ENCODE measurements at regions of chr13 and their contacts with region 1.

Region 1: GRCh38 chr13:27362064-27362883 is 62.1 kb upstream of the GTF3A start:
- DNase-seq: peak; percentile 87
- ATAC-seq: peak; percentile 97
- H3K4me3 Mint-ChIP-seq: peak overlapping the region; percentile 68
- H3K27ac Mint-ChIP-seq: peak overlapping the region; percentile 39
- H3K4me1 Mint-ChIP-seq: peaks cover 5% of the 10 kb centered on the region
- H3K27me3 Mint-ChIP-seq: peaks cover 22% of the 10 kb centered on the region

Region 2: GRCh38 chr13:26946684-26947343 is 415.5 kb before region 1 on chr13:
- CTCF ChIA-PET with region 1: interaction called, 13 read pairs
- POLR2A ChIA-PET with region 1: no interaction called
- DNase-seq: no peak
- ATAC-seq: no peak
- H3K4me3 Mint-ChIP-seq: no peak overlapping the region
- H3K27ac Mint-ChIP-seq: no peak overlapping the region
- H3K4me1 Mint-ChIP-seq: no peaks in the 10 kb centered on the region
- H3K27me3 Mint-ChIP-seq: peaks cover 4% of the 10 kb centered on the region

Region 3: GRCh38 chr13:26985285-26985878 is 376.9 kb before region 1 on chr13:
- CTCF ChIA-PET with region 1: interaction called, 164 read pairs
- POLR2A ChIA-PET with region 1: interaction called, 4 read pairs
- DNase-seq: peak; percentile 85
- ATAC-seq: peak; percentile 87
- H3K4me3 Mint-ChIP-seq: no peak overlapping the region
- H3K27ac Mint-ChIP-seq: no peak overlapping the region
- H3K4me1 Mint-ChIP-seq: peaks cover 9% of the 10 kb centered on the region
- H3K27me3 Mint-ChIP-seq: peaks cover 9% of the 10 kb centered on the region

Region 4: GRCh38 chr13:27347211-27347772 is 15.0 kb before region 1 on chr13:
- CTCF ChIA-PET with region 1: interaction called, 14 read pairs
- POLR2A ChIA-PET with region 1: interaction called, 4 read pairs
- DNase-seq: no peak
- ATAC-seq: no peak
- H3K4me3 Mint-ChIP-seq: no peak overlapping the region
- H3K27ac Mint-ChIP-seq: no peak overlapping the region
- H3K4me1 Mint-ChIP-seq: no peaks in the 10 kb centered on the region
- H3K27me3 Mint-ChIP-seq: peaks cover 14% of the 10 kb centered on the region

Region 5: DNA sequence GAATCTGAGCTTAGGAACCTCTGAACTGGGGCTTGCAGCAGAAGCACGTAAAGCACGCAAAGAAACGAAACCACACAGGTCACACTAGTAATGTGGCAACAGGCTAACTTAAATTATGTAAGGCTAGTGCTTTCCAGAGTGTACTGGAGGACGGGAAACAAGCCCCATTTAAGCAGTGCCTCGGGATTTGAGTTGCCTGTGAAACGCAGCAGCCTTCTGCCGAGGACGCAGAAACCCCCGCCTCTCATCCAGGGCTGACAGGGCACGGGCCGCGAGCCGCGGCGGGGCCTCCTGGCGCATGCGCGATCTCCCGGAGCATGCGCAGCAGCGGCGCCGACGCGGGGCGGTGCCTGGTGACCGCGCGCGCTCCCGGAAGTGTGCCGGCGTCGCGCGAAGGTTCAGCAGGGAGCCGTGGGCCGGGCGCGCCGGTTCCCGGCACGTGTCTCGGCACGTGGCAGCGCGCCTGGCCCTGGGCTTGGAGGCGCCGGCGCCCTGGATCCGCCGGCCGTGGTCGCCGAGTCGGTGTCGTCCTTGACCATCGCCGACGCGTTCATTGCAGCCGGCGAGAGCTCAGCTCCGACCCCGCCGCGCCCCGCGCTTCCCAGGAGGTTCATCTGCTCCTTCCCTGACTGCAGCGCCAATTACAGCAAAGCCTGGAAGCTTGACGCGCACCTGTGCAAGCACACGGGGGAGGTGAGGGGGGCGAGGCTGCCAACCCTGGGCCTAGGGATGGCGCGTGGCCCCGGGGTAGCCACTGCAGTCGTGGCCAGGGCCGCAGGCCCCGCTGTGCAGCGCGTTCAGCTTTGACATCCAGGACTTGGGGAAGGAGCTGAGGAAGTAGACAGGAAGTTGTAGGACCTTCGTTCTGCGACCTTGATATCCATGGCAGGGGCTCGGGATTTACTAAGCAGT is 62.2 kb after region 1 on chr13 and contains the start of gene GTF3A:
- CTCF ChIA-PET with region 1: interaction called, 20 read pairs
- POLR2A ChIA-PET with region 1: interaction called, 3 read pairs
- DNase-seq: peak; percentile 85
- ATAC-seq: peak; percentile 73
- H3K4me3 Mint-ChIP-seq: peak within 1 kb of the TSS; percentile 84
- H3K27ac Mint-ChIP-seq: peak within 1 kb of the TSS; percentile 92
- H3K4me1 Mint-ChIP-seq: peaks cover 33% of the 10 kb centered on the region
- H3K27me3 Mint-ChIP-seq: no peaks in the 10 kb centered on the region
- total RNA-seq, gene GTF3A: 227 to 233 TPM